PC-9 (cell line): ENCODE measurements at regions of chr3 and their contacts with region 1.

Region 1: GRCh38 chr3:27185231-27185989 is 183.8 kb downstream of the NEK10 start:
- DNase-seq: no peak
- H3K4me3 ChIP-seq: no peak overlapping the region
- H3K27ac ChIP-seq: no peak overlapping the region
- H3K4me1 ChIP-seq: no peaks in the 10 kb centered on the region
- H3K27me3 ChIP-seq: no peaks in the 10 kb centered on the region
- CTCF ChIP-seq: no peak

Region 2: DNA sequence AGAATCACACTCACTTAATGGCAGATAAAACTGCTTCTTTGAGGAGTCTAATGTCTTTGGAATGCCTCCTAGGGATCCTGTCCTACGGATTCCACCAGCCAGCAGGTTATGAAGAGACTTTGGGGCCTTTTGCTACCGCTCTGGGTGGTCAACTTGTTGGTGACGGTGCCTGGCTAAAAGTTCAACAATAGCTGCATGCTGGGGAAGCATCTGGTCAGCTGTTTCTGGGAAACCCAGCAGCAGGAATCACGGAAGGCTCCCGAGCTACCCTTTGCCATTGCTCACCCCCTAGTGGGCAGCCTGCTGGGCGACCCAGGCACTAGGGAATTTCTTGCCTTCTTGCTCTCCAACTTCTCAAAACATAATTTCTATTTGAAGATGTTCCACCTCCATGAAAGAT is 79.5 kb before region 1 on chr3:
- CTCF ChIA-PET with region 1: no interaction called
- POLR2A ChIA-PET with region 1: interaction called, 10 read pairs
- intact Hi-C with region 1: no loop called
- DNase-seq: no peak
- H3K4me3 ChIP-seq: no peak overlapping the region
- H3K27ac ChIP-seq: no peak overlapping the region
- H3K4me1 ChIP-seq: no peaks in the 10 kb centered on the region
- H3K27me3 ChIP-seq: no peaks in the 10 kb centered on the region
- CTCF ChIP-seq: peak; percentile 16; the same call in 1 of the 2 replicates